PC-3 (cell line): ENCODE measurements at regions of chr2 and their contacts with region 1.

Region 1: GRCh38 chr2:31233741-31234682 is at the start of gene EHD3:
- DNase-seq: peak; percentile 88
- ATAC-seq: peak; percentile 98
- H3K4me3 ChIP-seq: peak within 1 kb of the TSS; percentile 70
- H3K27ac ChIP-seq: no peak within 1 kb of the TSS
- H3K4me1 ChIP-seq: peaks cover 7% of the 10 kb centered on the region; the same call in 1 of the 2 replicates
- H3K27me3 ChIP-seq: no peaks in the 10 kb centered on the region
- CTCF ChIP-seq: peak; percentile 71
- total RNA-seq, gene EHD3: 3.2 and 4.4 TPM in 2 replicates

Region 2: DNA sequence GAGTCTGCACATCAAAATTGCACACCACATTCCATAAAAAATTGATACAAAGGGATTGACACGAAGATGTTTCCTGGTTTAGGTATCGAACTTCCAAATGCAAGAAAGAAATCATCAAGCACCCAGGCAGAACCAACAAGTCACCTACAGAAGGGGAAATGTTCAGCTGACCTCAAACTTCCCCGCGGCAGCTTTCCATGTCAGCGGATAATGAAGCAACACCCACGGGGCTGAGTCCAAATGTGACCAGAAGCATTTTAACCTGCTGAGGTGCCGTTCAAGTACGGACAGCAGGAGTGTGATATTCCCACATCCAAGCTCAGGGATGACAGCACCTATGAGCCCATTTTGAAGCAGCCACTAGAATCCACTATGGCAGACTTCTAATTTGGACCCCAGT is 220.7 kb before region 1 on chr2:
- CTCF ChIA-PET with region 1: no interaction called
- POLR2A ChIA-PET with region 1: no interaction called
- intact Hi-C with region 1: no loop called
- DNase-seq: no peak
- ATAC-seq: no peak
- H3K4me3 ChIP-seq: no peak overlapping the region
- H3K27ac ChIP-seq: no peak overlapping the region
- H3K4me1 ChIP-seq: no peaks in the 10 kb centered on the region
- H3K27me3 ChIP-seq: 0 out of 2 replicates have a peak, but pooled peaks cover 6% of the 10 kb centered on the region
- CTCF ChIP-seq: no peak

Region 3: DNA sequence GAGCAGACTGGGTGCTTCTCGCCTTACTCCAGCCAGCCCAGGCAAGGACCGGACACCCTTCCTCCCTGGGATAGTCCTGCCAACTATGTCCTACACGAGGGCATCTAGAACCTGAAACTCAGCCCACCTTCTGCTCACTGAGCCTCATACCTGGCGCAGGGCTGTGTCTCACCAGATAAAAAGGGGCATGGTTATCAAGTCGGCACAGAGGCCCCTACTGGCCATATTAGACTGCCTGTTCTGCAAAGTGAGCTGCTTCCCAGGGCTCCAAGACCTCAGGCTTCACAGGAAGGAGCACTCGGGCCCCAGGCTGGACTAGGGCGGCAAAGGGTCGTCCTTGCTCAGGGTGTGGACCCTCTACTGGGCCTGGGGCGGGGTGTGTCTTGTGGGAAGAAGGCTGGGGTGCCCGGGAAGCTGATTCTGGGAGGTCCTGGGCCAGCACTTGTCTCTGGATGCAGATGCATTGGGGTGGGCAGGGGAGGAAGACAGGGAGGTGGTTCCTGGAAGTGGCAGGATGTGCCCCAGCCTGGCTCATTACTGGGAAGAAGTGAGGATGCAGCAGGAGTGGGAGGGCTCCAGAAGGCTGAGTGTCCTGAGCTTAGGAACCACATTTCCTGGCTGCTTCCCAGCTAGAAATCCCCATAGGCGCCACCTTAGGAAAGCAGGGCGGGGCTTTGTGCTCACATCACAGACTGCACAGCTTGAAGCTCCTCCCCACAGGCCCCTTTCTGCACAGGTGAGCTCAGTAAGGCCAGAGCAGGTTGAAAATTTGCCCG is 19.5 kb after region 1 on chr2:
- CTCF ChIA-PET with region 1: no interaction called
- POLR2A ChIA-PET with region 1: no interaction called
- intact Hi-C with region 1: no loop called
- DNase-seq: peak; percentile 31
- ATAC-seq: no peak
- H3K4me3 ChIP-seq: no peak overlapping the region
- H3K27ac ChIP-seq: no peak overlapping the region
- H3K4me1 ChIP-seq: peaks cover 12% of the 10 kb centered on the region; the same call in 1 of the 2 replicates
- H3K27me3 ChIP-seq: no peaks in the 10 kb centered on the region
- CTCF ChIP-seq: no peak

Region 4: DNA sequence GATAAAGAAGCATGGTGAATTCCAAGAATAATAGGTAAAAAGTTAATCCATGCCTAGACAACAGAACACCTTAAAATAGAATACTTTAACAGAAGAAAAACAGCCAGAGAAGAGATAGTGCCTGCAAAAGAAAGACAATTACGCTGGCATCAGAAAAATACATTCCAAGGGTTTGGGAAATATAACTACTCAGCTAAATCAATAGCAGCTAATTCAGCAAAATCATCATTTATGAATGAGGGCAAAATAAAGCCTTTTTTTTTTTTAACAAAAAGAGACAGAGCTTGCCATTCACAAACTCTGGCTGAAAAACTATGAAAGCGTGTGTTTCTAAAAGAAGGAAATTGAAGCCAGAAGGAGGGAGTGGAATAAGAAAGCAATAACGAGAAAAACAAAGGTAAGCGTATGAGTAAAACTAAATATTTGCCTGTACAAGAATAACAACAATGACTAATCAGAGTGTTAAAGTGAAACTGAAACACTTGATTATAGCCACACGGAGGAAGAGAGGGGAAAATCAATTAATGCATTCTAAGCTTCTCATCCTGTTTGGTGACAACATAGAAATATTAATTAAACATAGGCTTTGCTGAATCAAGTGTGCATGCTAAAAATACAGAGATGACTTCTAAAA is 90.1 kb after region 1 on chr2:
- CTCF ChIA-PET with region 1: no interaction called
- POLR2A ChIA-PET with region 1: no interaction called
- intact Hi-C with region 1: loop called (anchors 2 kb)
- DNase-seq: peak; percentile 49
- ATAC-seq: peak; percentile 86
- H3K4me3 ChIP-seq: peak overlapping the region; percentile 68
- H3K27ac ChIP-seq: peak overlapping the region; percentile 16; the same call in 1 of the 2 replicates
- H3K4me1 ChIP-seq: peaks cover 7% of the 10 kb centered on the region
- H3K27me3 ChIP-seq: no peaks in the 10 kb centered on the region
- CTCF ChIP-seq: no peak

Region 5: GRCh38 chr2:31413862-31414550 is 180.0 kb after region 1 on chr2:
- CTCF ChIA-PET with region 1: no interaction called
- POLR2A ChIA-PET with region 1: no interaction called
- intact Hi-C with region 1: loop called (anchors 10 kb)
- DNase-seq: peak; percentile 39
- ATAC-seq: no peak
- H3K4me3 ChIP-seq: no peak overlapping the region
- H3K27ac ChIP-seq: peak overlapping the region; percentile 12; the same call in 1 of the 2 replicates
- H3K4me1 ChIP-seq: peaks cover 34% of the 10 kb centered on the region
- H3K27me3 ChIP-seq: no peaks in the 10 kb centered on the region
- CTCF ChIP-seq: peak; percentile 53; the same call in 1 of the 2 replicates

Region 6: GRCh38 chr2:31523871-31524492 is 290.0 kb after region 1 on chr2:
- CTCF ChIA-PET with region 1: no interaction called
- POLR2A ChIA-PET with region 1: no interaction called
- intact Hi-C with region 1: loop called (anchors 10 kb)
- DNase-seq: peak; percentile 86
- ATAC-seq: peak; percentile 69
- H3K4me3 ChIP-seq: no peak overlapping the region
- H3K27ac ChIP-seq: no peak overlapping the region
- H3K4me1 ChIP-seq: no peaks in the 10 kb centered on the region
- H3K27me3 ChIP-seq: peaks cover 36% of the 10 kb centered on the region
- CTCF ChIP-seq: peak; percentile 89